ENCODE measurements at regions of chr7 and their contacts with region 1.

Region 1: GRCh38 chr7:124536156-124536762 is 229.3 kb downstream of the GPR37 start:
- DNase-seq: no peak
- ATAC-seq: no peak
- H3K4me3 ChIP-seq: no peak overlapping the region
- H3K4me3 Mint-ChIP-seq: no peak overlapping the region
- H3K27ac ChIP-seq: no peak overlapping the region
- H3K27ac Mint-ChIP-seq: no peak overlapping the region
- H3K4me1 ChIP-seq: no peaks in the 10 kb centered on the region
- H3K4me1 Mint-ChIP-seq: no peaks in the 10 kb centered on the region
- H3K27me3 ChIP-seq: no peaks in the 10 kb centered on the region
- H3K27me3 Mint-ChIP-seq: no peaks in the 10 kb centered on the region

Region 2: GRCh38 chr7:123057911-123058310 is 1478.3 kb before region 1 on chr7:
- CTCF ChIA-PET with region 1: no interaction called
- POLR2A ChIA-PET with region 1: no interaction called
- intact Hi-C with region 1: no loop called
- DNase-seq: no peak
- ATAC-seq: no peak
- H3K4me3 ChIP-seq: no peak overlapping the region
- H3K4me3 Mint-ChIP-seq: no peak overlapping the region
- H3K27ac ChIP-seq: no peak overlapping the region
- H3K27ac Mint-ChIP-seq: no peak overlapping the region
- H3K4me1 ChIP-seq: no peaks in the 10 kb centered on the region
- H3K4me1 Mint-ChIP-seq: no peaks in the 10 kb centered on the region
- H3K27me3 ChIP-seq: no peaks in the 10 kb centered on the region
- H3K27me3 Mint-ChIP-seq: no peaks in the 10 kb centered on the region

Region 3: DNA sequence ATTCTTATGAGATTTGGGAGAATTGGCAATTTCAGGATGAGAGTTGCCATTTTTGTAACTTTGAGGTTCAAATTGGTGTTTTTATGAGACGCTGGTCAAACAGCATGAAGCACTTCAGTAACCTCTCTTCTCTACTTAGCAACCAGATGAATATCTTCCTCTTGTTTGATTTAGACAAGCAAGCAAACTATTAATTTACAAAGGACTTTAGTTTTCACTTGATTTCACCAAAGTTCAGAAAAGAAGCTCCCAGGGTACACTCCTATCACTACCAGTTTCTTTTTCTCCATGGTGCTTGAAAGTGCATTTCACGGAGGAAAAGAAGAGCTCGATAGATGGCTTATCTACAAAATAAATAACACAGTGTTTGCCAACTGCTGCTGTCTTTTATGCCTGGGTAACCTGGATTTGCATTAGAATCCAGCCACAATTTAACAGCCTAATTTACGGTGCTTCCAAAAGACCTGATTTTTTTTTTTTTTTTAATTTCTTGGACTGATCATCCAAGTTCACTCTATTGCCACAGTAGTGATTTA is 46.4 kb before region 1 on chr7:
- CTCF ChIA-PET with region 1: no interaction called
- POLR2A ChIA-PET with region 1: no interaction called
- intact Hi-C with region 1: loop called in 1 of 2 experiments (anchors 1 kb)
- DNase-seq: no peak
- ATAC-seq: no peak
- H3K4me3 ChIP-seq: no peak overlapping the region
- H3K4me3 Mint-ChIP-seq: no peak overlapping the region
- H3K27ac ChIP-seq: no peak overlapping the region
- H3K27ac Mint-ChIP-seq: no peak overlapping the region
- H3K4me1 ChIP-seq: no peaks in the 10 kb centered on the region
- H3K4me1 Mint-ChIP-seq: no peaks in the 10 kb centered on the region
- H3K27me3 ChIP-seq: no peaks in the 10 kb centered on the region
- H3K27me3 Mint-ChIP-seq: no peaks in the 10 kb centered on the region

Region 4: DNA sequence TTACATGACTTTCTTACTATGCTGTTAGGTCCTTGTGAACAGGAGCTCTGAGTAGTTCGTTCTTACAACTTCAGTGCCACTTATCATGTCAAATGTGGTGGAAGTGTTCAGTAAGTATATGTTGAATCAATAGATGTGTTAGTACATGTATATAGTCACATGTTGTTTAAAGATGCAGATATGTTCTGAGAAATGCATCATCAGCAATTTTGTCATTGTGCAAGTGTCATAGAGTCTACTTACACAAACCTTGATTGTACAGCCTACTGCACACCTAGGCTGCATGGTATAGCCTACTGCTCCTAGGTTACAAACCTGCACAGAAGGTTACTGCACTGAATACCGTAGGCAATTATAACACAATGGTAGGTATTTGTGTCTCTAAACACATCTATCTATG is 54.6 kb after region 1 on chr7:
- CTCF ChIA-PET with region 1: no interaction called
- POLR2A ChIA-PET with region 1: no interaction called
- intact Hi-C with region 1: no loop called
- DNase-seq: no peak
- ATAC-seq: no peak
- H3K4me3 ChIP-seq: no peak overlapping the region
- H3K4me3 Mint-ChIP-seq: no peak overlapping the region
- H3K27ac ChIP-seq: no peak overlapping the region
- H3K27ac Mint-ChIP-seq: no peak overlapping the region
- H3K4me1 ChIP-seq: no peaks in the 10 kb centered on the region
- H3K4me1 Mint-ChIP-seq: no peaks in the 10 kb centered on the region
- H3K27me3 ChIP-seq: no peaks in the 10 kb centered on the region
- H3K27me3 Mint-ChIP-seq: no peaks in the 10 kb centered on the region